ENCODE measurements at regions of chr3 and their contacts with region 1.

Region 1: DNA sequence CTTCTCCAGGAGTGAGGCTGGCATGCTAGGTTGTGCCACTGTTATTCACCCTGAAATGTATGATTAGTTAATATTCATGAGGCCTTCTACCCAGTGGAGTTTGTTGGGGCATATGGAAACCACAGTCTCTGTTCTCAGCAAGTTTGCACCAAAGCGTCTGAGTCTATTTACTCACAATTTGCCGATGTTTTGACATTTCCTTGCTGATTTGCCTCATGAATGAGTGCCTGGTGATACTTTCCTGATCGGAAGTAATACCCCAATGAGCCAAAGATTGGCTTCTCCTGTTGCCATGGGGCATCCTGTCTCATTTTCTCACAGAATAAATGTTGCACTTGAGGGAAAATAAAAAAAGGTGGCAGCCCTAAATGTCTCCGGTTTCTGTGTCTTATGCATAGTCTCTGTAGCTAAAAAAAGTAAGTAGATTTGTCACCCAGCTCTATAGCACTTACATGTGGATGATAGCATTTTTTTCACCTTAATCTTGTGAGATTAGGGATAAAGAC is 73.7 kb upstream of the CADPS start:
- DNase-seq: no peak
- H3K4me3 ChIP-seq: no peak overlapping the region
- H3K4me3 Mint-ChIP-seq: no peak overlapping the region
- H3K27ac Mint-ChIP-seq: no peak overlapping the region
- H3K4me1 ChIP-seq: no peaks in the 10 kb centered on the region
- H3K4me1 Mint-ChIP-seq: no peaks in the 10 kb centered on the region
- H3K27me3 ChIP-seq: no peaks in the 10 kb centered on the region
- H3K27me3 Mint-ChIP-seq: no peaks in the 10 kb centered on the region
- CTCF ChIP-seq: no peak

Region 2: GRCh38 chr3:62936626-62937254 is 12.1 kb before region 1 on chr3:
- CTCF ChIA-PET with region 1: no interaction called
- POLR2A ChIA-PET with region 1: no interaction called
- intact Hi-C with region 1: no loop called
- DNase-seq: no peak
- H3K4me3 ChIP-seq: no peak overlapping the region
- H3K4me3 Mint-ChIP-seq: no peak overlapping the region
- H3K27ac Mint-ChIP-seq: no peak overlapping the region
- H3K4me1 ChIP-seq: no peaks in the 10 kb centered on the region
- H3K4me1 Mint-ChIP-seq: no peaks in the 10 kb centered on the region
- H3K27me3 ChIP-seq: no peaks in the 10 kb centered on the region
- H3K27me3 Mint-ChIP-seq: peaks cover 10% of the 10 kb centered on the region
- CTCF ChIP-seq: no peak

Region 3: GRCh38 chr3:63287636-63288035 is 338.8 kb after region 1 on chr3:
- CTCF ChIA-PET with region 1: no interaction called
- POLR2A ChIA-PET with region 1: no interaction called
- intact Hi-C with region 1: loop called (anchors 5 kb)
- DNase-seq: no peak
- H3K4me3 ChIP-seq: no peak overlapping the region
- H3K4me3 Mint-ChIP-seq: no peak overlapping the region
- H3K27ac Mint-ChIP-seq: no peak overlapping the region
- H3K4me1 ChIP-seq: no peaks in the 10 kb centered on the region
- H3K4me1 Mint-ChIP-seq: no peaks in the 10 kb centered on the region
- H3K27me3 ChIP-seq: no peaks in the 10 kb centered on the region
- H3K27me3 Mint-ChIP-seq: peaks cover 13% of the 10 kb centered on the region
- CTCF ChIP-seq: no peak

Measured in Caco-2 (cell line).